Naive thymus-derived CD4-positive, alpha-beta T cell (primary cell): ENCODE measurements at regions of chr11 and their contacts with region 1.

Region 1: GRCh38 chr11:47642099-47642855 is at the start of gene MTCH2:
- DNase-seq: peak; percentile 92 to 97 (median 95)
- ATAC-seq: peak; percentile 97
- H3K4me3 ChIP-seq: peak within 1 kb of the TSS; percentile 85
- H3K4me3 Mint-ChIP-seq: peak within 1 kb of the TSS; percentile 92 to 99 (median 96)
- H3K27ac ChIP-seq: peak within 1 kb of the TSS; percentile 83
- H3K27ac Mint-ChIP-seq: peak within 1 kb of the TSS; percentile 94 to 99 (median 97)
- H3K4me1 ChIP-seq: peaks cover 8 to 11% of the 10 kb centered on the region in 2 donors
- H3K4me1 Mint-ChIP-seq: peaks cover 17 to 32% (median 25%) of the 10 kb centered on the region in 7 donors
- H3K27me3 ChIP-seq: no peaks in the 10 kb centered on the region
- H3K27me3 Mint-ChIP-seq: no peaks in the 10 kb centered on the region
- total RNA-seq, gene MTCH2: 19.8 to 88.6 (median 21.1) TPM

Region 2: DNA sequence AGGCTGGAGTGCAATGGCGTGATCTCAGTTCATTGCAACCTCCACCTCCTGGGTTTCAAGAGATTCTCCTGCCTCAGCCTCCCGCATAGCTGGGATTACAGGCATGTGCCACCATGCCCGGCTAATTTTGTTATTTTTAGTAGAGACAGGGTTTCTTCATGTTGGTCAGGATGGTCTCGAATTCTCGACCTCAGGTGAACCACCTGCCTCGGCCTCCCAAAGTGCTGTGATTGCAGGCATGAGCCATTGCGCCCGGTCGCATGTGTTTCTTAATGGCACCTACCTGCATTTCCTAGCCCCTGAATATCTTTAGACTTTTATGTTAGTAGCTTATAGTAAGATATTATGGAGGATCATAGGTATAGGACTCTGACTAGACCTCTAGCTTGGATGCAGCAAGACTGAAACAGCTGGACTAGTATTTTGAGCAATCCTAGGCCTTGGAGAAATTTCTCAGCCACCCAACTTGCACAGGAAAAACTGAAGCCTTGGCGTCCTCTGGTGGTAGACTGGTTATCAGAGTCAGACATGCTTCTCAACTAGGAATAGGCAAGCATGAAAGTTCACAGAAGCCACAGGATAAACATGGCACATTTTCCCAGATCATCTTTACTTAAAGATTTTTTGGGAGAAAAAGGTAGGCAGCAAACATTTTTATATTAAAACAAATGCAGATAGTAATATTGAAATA is 25.4 kb before region 1 on chr11:
- CTCF ChIA-PET with region 1: no interaction called
- POLR2A ChIA-PET with region 1: no interaction called
- intact Hi-C with region 1: no loop called
- DNase-seq: no peak
- ATAC-seq: no peak
- H3K4me3 ChIP-seq: no peak overlapping the region
- H3K4me3 Mint-ChIP-seq: no peak overlapping the region
- H3K27ac ChIP-seq: no peak overlapping the region
- H3K27ac Mint-ChIP-seq: peak overlapping the region in 1 of 9 donors; percentile 46
- H3K4me1 ChIP-seq: no peaks in the 10 kb centered on the region
- H3K4me1 Mint-ChIP-seq: peaks cover 0 to under 1% (median 0%) of the 10 kb centered on the region in 7 donors
- H3K27me3 ChIP-seq: no peaks in the 10 kb centered on the region
- H3K27me3 Mint-ChIP-seq: no peaks in the 10 kb centered on the region

Region 3: DNA sequence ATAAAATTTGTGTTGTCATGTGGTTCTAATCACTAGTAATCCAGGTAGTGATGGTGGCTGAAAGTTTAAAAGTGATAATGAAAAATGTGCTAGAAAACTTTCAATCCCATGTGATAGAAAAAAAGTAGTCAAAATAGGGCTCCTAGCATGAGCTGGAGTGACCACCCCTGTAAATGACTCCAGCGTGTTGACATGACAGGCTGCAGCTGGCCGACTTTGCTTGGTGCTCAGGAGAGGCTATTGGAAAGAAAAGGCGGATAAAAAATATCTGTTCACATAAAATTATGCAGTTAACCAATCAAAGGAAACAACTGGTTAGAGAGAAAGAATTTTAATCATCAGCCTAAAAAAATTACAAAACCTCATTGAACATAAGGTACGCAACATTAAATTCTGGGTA is 17.0 kb after region 1 on chr11:
- CTCF ChIA-PET with region 1: no interaction called
- POLR2A ChIA-PET with region 1: no interaction called
- intact Hi-C with region 1: no loop called
- DNase-seq: no peak
- ATAC-seq: no peak
- H3K4me3 ChIP-seq: no peak overlapping the region
- H3K4me3 Mint-ChIP-seq: no peak overlapping the region
- H3K27ac ChIP-seq: no peak overlapping the region
- H3K27ac Mint-ChIP-seq: no peak overlapping the region
- H3K4me1 ChIP-seq: no peaks in the 10 kb centered on the region
- H3K4me1 Mint-ChIP-seq: peaks cover 0 to 4% (median 0%) of the 10 kb centered on the region in 7 donors
- H3K27me3 ChIP-seq: no peaks in the 10 kb centered on the region
- H3K27me3 Mint-ChIP-seq: peaks cover 0 to 4% (median 0%) of the 10 kb centered on the region in 5 donors

Region 4: GRCh38 chr11:47715082-47715669 is 72.9 kb after region 1 on chr11 and contains the start of gene AGBL2:
- CTCF ChIA-PET with region 1: no interaction called
- POLR2A ChIA-PET with region 1: no interaction called
- intact Hi-C with region 1: loop called (anchors 1 kb)
- DNase-seq: peak; percentile 61 to 85 (median 82)
- ATAC-seq: peak; percentile 99
- H3K4me3 ChIP-seq: peak within 1 kb of the TSS; percentile 94
- H3K4me3 Mint-ChIP-seq: peak within 1 kb of the TSS; percentile 95 to 99 (median 97)
- H3K27ac ChIP-seq: peak within 1 kb of the TSS; percentile 84
- H3K27ac Mint-ChIP-seq: peak within 1 kb of the TSS; percentile 96 to 99 (median 98)
- H3K4me1 ChIP-seq: peaks cover 7 to 15% of the 10 kb centered on the region in 2 donors
- H3K4me1 Mint-ChIP-seq: peaks cover 0 to 22% (median 15%) of the 10 kb centered on the region in 7 donors
- H3K27me3 ChIP-seq: no peaks in the 10 kb centered on the region
- H3K27me3 Mint-ChIP-seq: no peaks in the 10 kb centered on the region
- total RNA-seq, gene AGBL2: 4.7 to 11.3 (median 8.1) TPM

Region 5: DNA sequence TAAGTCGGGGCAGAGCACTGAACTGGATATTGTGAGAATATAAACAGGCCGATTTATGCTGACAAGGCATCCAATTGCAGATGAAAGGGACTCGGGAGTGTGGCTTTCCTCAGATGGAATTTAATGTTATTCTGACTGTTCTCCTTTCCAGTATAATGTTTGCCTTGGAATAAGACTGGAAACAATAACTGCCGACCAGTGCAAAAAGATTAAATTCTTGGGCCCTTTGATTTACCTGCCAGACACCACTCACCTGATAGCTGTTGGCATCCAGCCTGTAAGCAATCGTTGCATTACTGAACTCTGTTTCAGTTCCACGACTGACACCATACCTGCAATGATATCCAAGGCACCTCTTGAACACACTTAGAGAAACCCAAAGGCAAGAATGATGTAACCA is 195.0 kb after region 1 on chr11:
- CTCF ChIA-PET with region 1: no interaction called
- POLR2A ChIA-PET with region 1: no interaction called
- intact Hi-C with region 1: no loop called
- DNase-seq: no peak
- ATAC-seq: no peak
- H3K4me3 ChIP-seq: no peak overlapping the region
- H3K4me3 Mint-ChIP-seq: no peak overlapping the region
- H3K27ac ChIP-seq: no peak overlapping the region
- H3K27ac Mint-ChIP-seq: no peak overlapping the region
- H3K4me1 ChIP-seq: no peaks in the 10 kb centered on the region
- H3K4me1 Mint-ChIP-seq: peaks cover 0 to 25% (median 18%) of the 10 kb centered on the region in 7 donors
- H3K27me3 ChIP-seq: no peaks in the 10 kb centered on the region
- H3K27me3 Mint-ChIP-seq: no peaks in the 10 kb centered on the region

Region 6: GRCh38 chr11:47946682-47947575 is 304.7 kb after region 1 on chr11:
- CTCF ChIA-PET with region 1: no interaction called
- POLR2A ChIA-PET with region 1: no interaction called
- intact Hi-C with region 1: no loop called
- DNase-seq: peak in 2 of 9 donors; percentile 11 to 44
- ATAC-seq: peak; percentile 67
- H3K4me3 ChIP-seq: no peak overlapping the region
- H3K4me3 Mint-ChIP-seq: peak overlapping the region in 1 of 10 donors; percentile 17
- H3K27ac ChIP-seq: no peak overlapping the region
- H3K27ac Mint-ChIP-seq: peak overlapping the region in 8 of 9 donors; percentile 3 to 74 (median 50)
- H3K4me1 ChIP-seq: peaks cover 4 to 23% of the 10 kb centered on the region in 2 donors
- H3K4me1 Mint-ChIP-seq: peaks cover 20 to 48% (median 42%) of the 10 kb centered on the region in 7 donors
- H3K27me3 ChIP-seq: no peaks in the 10 kb centered on the region
- H3K27me3 Mint-ChIP-seq: no peaks in the 10 kb centered on the region